ENCODE measurements at regions of chr17 and their contacts with region 1.

Region 1: GRCh38 chr17:1488030-1488863 is 4.2 kb downstream of the MYO1C start:
- DNase-seq: peak; percentile 64
- H3K4me3 Mint-ChIP-seq: peak overlapping the region; percentile 84
- H3K27ac Mint-ChIP-seq: no peak overlapping the region
- H3K4me1 Mint-ChIP-seq: peaks cover 24% of the 10 kb centered on the region
- H3K27me3 Mint-ChIP-seq: peaks cover 5% of the 10 kb centered on the region

Region 2: DNA sequence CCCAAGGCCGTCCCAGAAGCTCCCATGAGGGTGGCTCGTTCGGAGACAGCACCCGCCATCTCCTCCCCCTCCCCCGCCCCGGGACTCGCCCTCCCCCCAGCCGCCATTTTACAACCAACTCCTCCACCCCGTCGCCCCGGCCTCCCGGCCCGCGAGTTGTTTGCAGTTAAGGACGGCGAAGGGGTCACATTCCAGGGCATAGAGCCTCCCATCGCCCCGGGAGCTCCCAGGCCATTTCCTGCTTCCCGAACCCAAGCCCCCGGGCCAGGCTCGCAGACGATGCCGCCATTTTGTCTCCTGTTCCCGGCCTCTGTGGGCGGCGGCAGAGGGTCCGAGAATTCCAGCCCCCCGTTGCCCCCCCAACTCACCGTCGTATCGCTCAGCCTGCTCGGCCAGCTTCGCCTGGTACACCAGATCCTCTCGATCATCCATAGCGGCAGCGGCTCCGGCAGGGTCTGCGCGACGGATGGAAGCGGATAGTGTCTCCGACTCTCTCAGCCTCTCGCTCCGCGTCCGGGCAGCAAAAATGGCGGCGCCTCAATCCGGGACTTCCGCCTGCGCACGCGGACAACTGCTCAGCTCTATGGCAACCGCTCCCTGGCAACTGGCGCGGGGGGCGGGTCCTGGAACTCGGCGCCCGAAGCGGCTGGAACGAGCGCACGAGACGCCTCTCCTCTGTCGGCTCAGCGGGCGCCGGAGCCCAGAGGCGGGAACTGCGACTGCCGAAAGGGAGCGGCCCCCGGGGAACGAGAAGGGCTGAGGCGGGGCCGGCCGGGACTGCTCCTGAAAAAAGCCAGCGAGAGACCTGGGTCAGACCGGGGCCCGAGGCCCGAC is 88.4 kb before region 1 on chr17 and contains the start of gene YWHAE:
- intact Hi-C with region 1: loop called (anchors 2 kb)
- DNase-seq: peak; percentile 95
- H3K4me3 Mint-ChIP-seq: peak within 1 kb of the TSS; percentile 97
- H3K27ac Mint-ChIP-seq: peak within 1 kb of the TSS; percentile 98
- H3K4me1 Mint-ChIP-seq: peaks cover 21% of the 10 kb centered on the region
- H3K27me3 Mint-ChIP-seq: peaks cover 5% of the 10 kb centered on the region
- total RNA-seq, gene YWHAE: 439 and 444 TPM in 2 replicates

Region 3: DNA sequence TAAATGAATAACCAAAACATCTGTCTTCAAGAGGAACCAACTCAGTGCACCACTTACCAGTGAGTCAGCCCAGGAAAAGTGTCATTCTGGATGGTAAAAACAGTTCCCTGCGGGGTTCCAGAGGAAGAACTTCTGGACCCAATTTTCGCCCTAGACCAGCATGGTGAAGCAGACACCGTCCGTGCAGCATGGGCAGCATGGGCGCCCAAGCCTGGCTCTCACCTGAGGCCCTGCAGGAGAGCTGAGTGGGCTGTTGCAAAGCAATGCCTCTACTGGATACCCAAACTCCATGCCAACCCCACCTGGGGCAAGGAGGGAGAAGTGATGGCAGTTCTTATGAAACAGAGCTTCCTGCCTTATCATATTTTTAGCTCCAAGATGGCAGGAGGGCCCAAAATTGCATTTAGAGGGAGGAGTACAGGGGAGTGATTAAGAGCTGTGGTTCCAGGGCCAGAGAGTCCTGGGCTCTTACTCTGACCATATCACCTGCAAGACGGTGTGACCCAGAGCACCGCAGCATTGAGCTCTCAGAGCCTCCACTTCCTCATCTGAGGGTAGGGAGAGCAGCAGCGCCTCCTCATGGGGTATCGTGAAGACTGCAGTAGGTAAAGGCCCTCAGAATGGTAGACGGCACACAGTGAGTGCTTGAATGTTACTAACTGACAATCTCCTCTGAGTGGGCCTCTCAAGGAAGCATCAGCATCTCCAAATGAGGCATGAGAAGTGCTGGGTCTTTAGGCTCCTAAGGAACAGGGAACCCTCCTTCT is 44.8 kb after region 1 on chr17:
- intact Hi-C with region 1: no loop called
- DNase-seq: no peak
- H3K4me3 Mint-ChIP-seq: no peak overlapping the region
- H3K27ac Mint-ChIP-seq: no peak overlapping the region
- H3K4me1 Mint-ChIP-seq: no peaks in the 10 kb centered on the region
- H3K27me3 Mint-ChIP-seq: no peaks in the 10 kb centered on the region

Region 4: GRCh38 chr17:1561400-1562175 is 73.3 kb after region 1 on chr17:
- intact Hi-C with region 1: loop called (anchors 1 kb)
- DNase-seq: peak; percentile 27
- H3K4me3 Mint-ChIP-seq: peak overlapping the region; percentile 88
- H3K27ac Mint-ChIP-seq: peak overlapping the region; percentile 61
- H3K4me1 Mint-ChIP-seq: peaks cover 40% of the 10 kb centered on the region
- H3K27me3 Mint-ChIP-seq: peaks cover 11% of the 10 kb centered on the region

Region 5: DNA sequence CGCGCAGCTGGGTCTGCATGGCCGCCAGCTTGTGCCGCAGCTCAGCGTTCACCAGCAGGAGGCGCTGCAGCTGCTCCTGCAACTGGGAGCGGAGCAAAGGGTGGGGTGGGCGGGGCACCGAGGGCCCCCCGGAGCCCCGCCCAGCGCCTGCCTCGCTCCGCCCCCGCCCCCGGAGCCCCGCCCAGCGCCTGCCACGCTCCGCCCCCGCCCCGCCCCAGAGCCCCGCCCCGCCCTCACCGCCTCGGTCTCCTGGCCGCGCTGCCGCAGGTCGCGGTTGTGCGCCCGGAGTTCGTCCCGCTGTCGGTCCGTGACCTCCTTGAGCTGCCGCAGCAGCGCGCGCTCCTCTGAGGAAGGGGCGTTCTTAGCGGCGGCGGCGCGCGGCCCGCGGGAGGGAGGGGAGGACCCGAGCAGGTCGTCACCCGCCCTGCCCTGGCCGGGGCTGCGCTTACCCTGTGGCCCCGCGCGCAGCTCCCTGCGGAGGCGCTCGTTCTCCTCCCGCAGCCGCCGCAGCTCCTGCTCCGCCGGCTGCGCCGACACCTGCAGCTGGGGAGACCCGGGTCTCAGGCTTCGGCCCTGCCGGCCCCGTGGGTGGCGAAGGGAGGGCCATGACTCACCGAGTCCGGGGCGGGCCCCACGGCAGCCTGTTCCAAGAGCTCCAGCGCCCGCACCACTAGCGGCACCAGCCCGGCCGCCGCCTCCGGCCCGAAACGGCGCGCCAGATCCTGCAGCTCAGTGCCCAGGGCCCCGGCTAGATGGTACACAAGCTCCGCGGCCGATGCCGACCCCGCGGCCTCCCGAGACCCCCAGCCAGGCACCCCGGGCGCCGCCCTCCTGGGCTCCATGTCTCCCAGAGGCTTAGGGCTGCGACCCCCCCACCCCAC is 161.0 kb after region 1 on chr17:
- intact Hi-C with region 1: loop called (anchors 5 kb)
- DNase-seq: peak; percentile 92
- H3K4me3 Mint-ChIP-seq: peak overlapping the region; percentile 59
- H3K27ac Mint-ChIP-seq: no peak overlapping the region
- H3K4me1 Mint-ChIP-seq: peaks cover 22% of the 10 kb centered on the region
- H3K27me3 Mint-ChIP-seq: peaks cover 2% of the 10 kb centered on the region

Measured in activated T-helper 1 cell treated with anti-CD3 and anti-CD28 coated beads, Interleukin-12 subunit alpha, Interleukin-12 subunit beta, Interleukin-2, Interleukin-4 antibody, amounts not matched to agents 30 ng/mL and 10 ng/mL and 1 ng/mL, durations not matched to agents 14 hours and 24 hours and 36 hours (primary cell).